ENCODE measurements at regions of chr5 and their contacts with region 1.

Region 1: GRCh38 chr5:148826053-148826738 is at the start of gene ADRB2:
- DNase-seq: peak; percentile 99
- H3K4me3 ChIP-seq: peak within 1 kb of the TSS; percentile 69 to 81 (median 81)
- H3K27ac ChIP-seq: peak within 1 kb of the TSS; percentile 76
- H3K4me1 ChIP-seq: peaks cover 33% of the 10 kb centered on the region
- H3K27me3 ChIP-seq: no peaks in the 10 kb centered on the region
- CTCF ChIP-seq: peak in 1 of 2 donors; percentile 23
- total RNA-seq, gene ADRB2: 4.8 to 14.8 TPM

Region 2: GRCh38 chr5:148740966-148741742 is 85.0 kb before region 1 on chr5:
- CTCF ChIA-PET with region 1: interaction called, 4 read pairs
- dilution Hi-C with region 1: loop called (anchors 5 kb)
- in situ Hi-C with region 1: no loop called
- intact Hi-C with region 1: loop called (anchors 1 kb)
- DNase-seq: peak; percentile 58
- H3K4me3 ChIP-seq: no peak overlapping the region
- H3K27ac ChIP-seq: no peak overlapping the region
- H3K4me1 ChIP-seq: no peaks in the 10 kb centered on the region
- H3K27me3 ChIP-seq: no peaks in the 10 kb centered on the region
- CTCF ChIP-seq: peak; percentile 66 to 77

Region 3: DNA sequence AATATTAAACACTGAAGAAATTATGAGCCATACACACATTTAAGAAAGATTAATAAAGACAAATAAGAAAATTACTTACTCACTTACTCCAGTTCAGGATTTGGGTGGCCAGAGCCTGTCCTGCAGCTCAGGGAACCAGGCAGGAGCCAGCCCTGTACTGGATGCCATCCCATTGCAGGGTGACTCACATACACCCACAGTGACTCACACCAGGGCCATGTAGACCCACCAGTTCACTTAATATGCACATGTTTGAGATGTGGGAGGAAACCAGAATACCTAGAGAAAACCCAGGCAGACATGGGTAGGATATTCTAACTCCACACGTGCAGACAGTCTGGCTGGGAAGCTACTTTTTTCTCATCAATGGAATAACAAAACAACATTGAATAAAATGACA is 49.4 kb before region 1 on chr5:
- CTCF ChIA-PET with region 1: no interaction called
- dilution Hi-C with region 1: no loop called
- in situ Hi-C with region 1: no loop called
- intact Hi-C with region 1: loop called (anchors 5 kb)
- DNase-seq: peak; percentile 95
- H3K4me3 ChIP-seq: no peak overlapping the region
- H3K27ac ChIP-seq: peak overlapping the region; percentile 67
- H3K4me1 ChIP-seq: peaks cover 22% of the 10 kb centered on the region
- H3K27me3 ChIP-seq: no peaks in the 10 kb centered on the region
- CTCF ChIP-seq: no peak

Region 4: GRCh38 chr5:148791334-148791667 is 34.9 kb before region 1 on chr5:
- CTCF ChIA-PET with region 1: no interaction called
- dilution Hi-C with region 1: loop called (anchors 5 kb)
- in situ Hi-C with region 1: no loop called
- intact Hi-C with region 1: loop called (anchors 2 kb)
- DNase-seq: peak; percentile 96
- H3K4me3 ChIP-seq: peak overlapping the region in 2 of 3 experiments; percentile 6 to 15
- H3K27ac ChIP-seq: peak overlapping the region; percentile 99
- H3K4me1 ChIP-seq: peaks cover 41% of the 10 kb centered on the region
- H3K27me3 ChIP-seq: no peaks in the 10 kb centered on the region
- CTCF ChIP-seq: no peak

Region 5: DNA sequence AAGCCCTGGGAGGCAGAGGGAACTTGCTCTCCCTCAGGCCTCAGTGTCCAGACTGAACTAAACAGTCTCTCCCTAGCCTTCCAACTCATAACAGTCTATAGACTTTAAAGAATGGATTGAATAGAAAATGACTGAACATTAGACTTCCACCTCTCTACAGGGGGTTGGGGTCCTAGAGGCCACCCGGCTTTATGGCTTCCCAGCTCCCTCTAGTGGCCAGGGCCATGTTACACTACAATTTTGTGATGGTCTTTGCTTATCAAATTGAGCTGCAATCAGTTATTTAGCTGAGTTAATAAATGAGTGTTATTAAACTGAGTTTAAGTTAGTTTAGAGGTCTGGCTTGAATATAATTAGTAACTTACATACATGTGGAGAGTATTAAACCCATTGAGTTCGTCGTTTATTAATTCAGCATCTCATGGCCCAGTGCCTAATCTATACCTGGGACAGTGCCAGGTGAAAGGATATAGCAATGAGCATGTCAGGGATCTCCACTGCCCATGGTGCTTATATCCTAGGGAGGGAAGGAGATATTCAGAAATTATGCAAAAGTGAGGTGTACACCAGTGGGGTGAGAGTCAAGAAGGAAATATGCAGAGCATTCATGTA is 131.5 kb after region 1 on chr5:
- CTCF ChIA-PET with region 1: interaction called, 4 read pairs
- dilution Hi-C with region 1: no loop called
- in situ Hi-C with region 1: no loop called
- intact Hi-C with region 1: loop called (anchors 1 kb)
- DNase-seq: peak; percentile 33
- H3K4me3 ChIP-seq: no peak overlapping the region
- H3K27ac ChIP-seq: peak overlapping the region; percentile 73
- H3K4me1 ChIP-seq: peaks cover 18% of the 10 kb centered on the region
- H3K27me3 ChIP-seq: no peaks in the 10 kb centered on the region
- CTCF ChIP-seq: peak; percentile 90

Region 6: DNA sequence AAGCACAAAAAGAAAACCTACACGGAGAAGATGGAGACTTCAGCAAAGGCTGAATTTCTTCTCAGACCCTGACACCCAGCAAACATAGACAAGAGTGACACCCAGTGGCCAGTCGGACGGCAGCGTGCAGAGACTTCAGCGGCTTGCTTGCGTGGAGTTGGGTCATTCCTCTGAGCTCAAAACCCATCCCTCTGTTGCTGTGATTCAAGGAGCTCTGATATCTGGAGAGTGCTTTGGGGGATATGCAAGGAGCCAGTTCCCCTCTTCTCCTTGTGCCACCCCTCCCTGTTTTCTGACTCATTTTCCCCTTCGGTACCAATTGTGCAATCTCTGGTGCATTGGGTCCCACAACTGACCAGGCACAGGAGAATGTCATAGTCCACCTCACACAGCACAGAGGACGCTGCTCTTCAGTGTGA is 209.2 kb after region 1 on chr5:
- CTCF ChIA-PET with region 1: interaction called, 7 read pairs
- dilution Hi-C with region 1: no loop called
- in situ Hi-C with region 1: no loop called
- intact Hi-C with region 1: loop called (anchors 1 kb)
- DNase-seq: peak; percentile 61
- H3K4me3 ChIP-seq: no peak overlapping the region
- H3K27ac ChIP-seq: no peak overlapping the region
- H3K4me1 ChIP-seq: peaks cover 25% of the 10 kb centered on the region
- H3K27me3 ChIP-seq: no peaks in the 10 kb centered on the region
- CTCF ChIP-seq: peak; percentile 88 to 90